Mucosa of descending colon (tissue), 3 donors: ENCODE measurements at regions of chr22 and their contacts with region 1.

Region 1: GRCh38 chr22:17830043-17830961 is 56.0 kb upstream of the BID start:
- DNase-seq: peak; percentile 82 to 96 (median 93)
- ATAC-seq: peak; percentile 91
- H3K4me3 ChIP-seq: no peak overlapping the region
- H3K4me1 ChIP-seq: peaks cover 16% of the 10 kb centered on the region
- CTCF ChIP-seq: peak; percentile 99

Region 2: GRCh38 chr22:17655289-17655688 is 175.0 kb before region 1 on chr22:
- intact Hi-C with region 1: no loop called
- DNase-seq: no peak
- ATAC-seq: peak; percentile 15
- H3K4me3 ChIP-seq: no peak overlapping the region
- H3K4me1 ChIP-seq: peaks cover 24% of the 10 kb centered on the region
- CTCF ChIP-seq: no peak

Region 3: GRCh38 chr22:17891481-17892167 is 61.3 kb after region 1 on chr22:
- intact Hi-C with region 1: loop called in 1 of 2 experiments (anchors 5 kb)
- DNase-seq: peak; percentile 82 to 92 (median 91)
- ATAC-seq: peak; percentile 74
- H3K4me3 ChIP-seq: no peak overlapping the region
- H3K4me1 ChIP-seq: peaks cover 45% of the 10 kb centered on the region
- CTCF ChIP-seq: peak; percentile 50

Region 4: GRCh38 chr22:18077639-18078328 is 247.5 kb after region 1 on chr22 and contains the start of gene PEX26:
- intact Hi-C with region 1: loop called (anchors 5 to 10 kb)
- DNase-seq: peak; percentile 96
- ATAC-seq: peak; percentile 95
- H3K4me3 ChIP-seq: peak within 1 kb of the TSS; percentile 85
- H3K4me1 ChIP-seq: peaks cover 25% of the 10 kb centered on the region
- CTCF ChIP-seq: no peak
- total RNA-seq, gene PEX26: 113 to 241 (median 123) TPM